ENCODE measurements at regions of chr14 and their contacts with region 1.

Region 1: DNA sequence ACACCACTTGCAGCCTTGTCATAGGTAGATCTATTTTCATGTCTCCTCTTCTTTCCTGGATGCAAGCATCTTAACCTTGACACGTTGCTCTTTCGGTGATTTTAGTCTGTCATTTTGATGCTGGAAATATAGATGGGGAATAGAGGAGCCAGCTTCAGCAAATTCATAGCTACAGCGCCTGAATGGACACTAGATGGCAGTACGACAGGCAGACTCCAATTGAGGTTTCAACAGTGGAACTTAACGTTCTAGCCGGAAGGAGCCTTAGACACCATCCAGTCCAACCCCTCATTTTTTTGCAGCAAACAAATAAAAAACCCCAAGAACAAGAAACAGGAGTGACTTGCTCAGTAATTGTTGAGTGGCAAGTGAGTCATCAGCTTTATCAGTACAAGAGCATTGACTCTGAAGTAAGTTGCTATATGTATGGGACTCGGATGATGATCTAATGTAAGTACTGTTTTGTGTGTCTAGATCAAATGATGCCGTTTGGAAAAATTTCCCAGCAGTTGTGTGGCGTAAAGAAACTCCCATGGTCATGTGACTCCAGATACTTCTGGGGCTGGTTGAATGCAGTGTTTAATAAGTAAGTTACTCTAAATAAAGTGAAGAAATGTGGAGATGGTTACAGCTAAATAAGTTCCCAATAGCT is 9.0 kb downstream of the DMAC2L start:
- DNase-seq: peak; percentile 83
- ATAC-seq: peak; percentile 97
- H3K4me3 Mint-ChIP-seq: no peak overlapping the region
- H3K27ac Mint-ChIP-seq: no peak overlapping the region
- H3K4me1 Mint-ChIP-seq: peaks cover 9% of the 10 kb centered on the region
- H3K27me3 Mint-ChIP-seq: no peaks in the 10 kb centered on the region

Region 2: GRCh38 chr14:49106741-49107667 is 1214.1 kb before region 1 on chr14:
- CTCF ChIA-PET with region 1: no interaction called
- POLR2A ChIA-PET with region 1: no interaction called
- DNase-seq: no peak
- ATAC-seq: no peak
- H3K4me3 Mint-ChIP-seq: no peak overlapping the region
- H3K27ac Mint-ChIP-seq: no peak overlapping the region
- H3K4me1 Mint-ChIP-seq: no peaks in the 10 kb centered on the region
- H3K27me3 Mint-ChIP-seq: no peaks in the 10 kb centered on the region

Region 3: DNA sequence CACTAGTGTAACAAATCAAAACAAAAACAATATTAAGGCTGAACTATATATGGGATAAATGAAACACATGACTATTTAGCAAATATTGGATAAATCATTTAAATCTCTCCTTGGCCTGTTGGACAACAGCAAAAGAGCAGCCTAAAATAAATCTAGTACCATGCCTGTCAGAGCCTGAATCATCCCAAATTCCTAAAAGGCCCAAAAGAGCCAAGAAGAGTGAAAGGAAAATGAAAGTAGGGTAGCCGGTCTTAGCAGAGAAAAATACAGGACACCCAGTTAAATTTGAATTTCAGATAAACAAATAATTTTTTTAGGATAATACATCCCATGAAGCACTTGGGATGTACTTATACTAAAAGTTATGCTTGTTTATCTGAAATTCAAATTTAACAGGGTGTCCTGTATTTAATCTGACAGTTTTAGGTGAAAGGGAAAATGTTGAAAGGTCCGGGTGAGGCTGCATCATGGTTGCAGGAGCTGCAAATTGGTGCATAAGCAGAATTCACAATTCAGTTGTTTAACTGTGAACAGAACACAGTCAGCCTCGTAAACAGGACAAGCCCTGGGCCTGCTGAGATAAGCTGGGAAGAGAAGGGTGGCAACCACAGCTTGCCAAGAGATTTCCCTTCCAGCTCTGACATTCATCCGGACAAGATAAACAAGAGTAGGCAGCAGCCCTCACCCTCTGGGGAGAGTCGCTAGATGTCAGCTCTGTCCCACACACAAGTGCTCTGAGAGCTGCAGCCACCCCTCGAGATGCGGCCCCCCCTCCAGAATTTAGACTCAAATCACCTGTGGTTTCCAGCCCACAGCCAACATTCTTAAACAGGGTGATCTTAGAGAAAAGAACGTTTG is 21.3 kb after region 1 on chr14:
- CTCF ChIA-PET with region 1: interaction called, 16 read pairs
- POLR2A ChIA-PET with region 1: interaction called, 4 read pairs
- DNase-seq: peak; percentile 71
- ATAC-seq: peak; percentile 83
- H3K4me3 Mint-ChIP-seq: no peak overlapping the region
- H3K27ac Mint-ChIP-seq: peak overlapping the region; percentile 52
- H3K4me1 Mint-ChIP-seq: peaks cover 22% of the 10 kb centered on the region
- H3K27me3 Mint-ChIP-seq: no peaks in the 10 kb centered on the region

Region 4: GRCh38 chr14:50363714-50364111 is 42.6 kb after region 1 on chr14:
- CTCF ChIA-PET with region 1: interaction called, 29 read pairs
- POLR2A ChIA-PET with region 1: interaction called, 6 read pairs
- DNase-seq: peak; percentile 77
- ATAC-seq: peak; percentile 92
- H3K4me3 Mint-ChIP-seq: peak overlapping the region; percentile 80
- H3K27ac Mint-ChIP-seq: peak overlapping the region; percentile 96
- H3K4me1 Mint-ChIP-seq: peaks cover 38% of the 10 kb centered on the region
- H3K27me3 Mint-ChIP-seq: no peaks in the 10 kb centered on the region

Region 5: DNA sequence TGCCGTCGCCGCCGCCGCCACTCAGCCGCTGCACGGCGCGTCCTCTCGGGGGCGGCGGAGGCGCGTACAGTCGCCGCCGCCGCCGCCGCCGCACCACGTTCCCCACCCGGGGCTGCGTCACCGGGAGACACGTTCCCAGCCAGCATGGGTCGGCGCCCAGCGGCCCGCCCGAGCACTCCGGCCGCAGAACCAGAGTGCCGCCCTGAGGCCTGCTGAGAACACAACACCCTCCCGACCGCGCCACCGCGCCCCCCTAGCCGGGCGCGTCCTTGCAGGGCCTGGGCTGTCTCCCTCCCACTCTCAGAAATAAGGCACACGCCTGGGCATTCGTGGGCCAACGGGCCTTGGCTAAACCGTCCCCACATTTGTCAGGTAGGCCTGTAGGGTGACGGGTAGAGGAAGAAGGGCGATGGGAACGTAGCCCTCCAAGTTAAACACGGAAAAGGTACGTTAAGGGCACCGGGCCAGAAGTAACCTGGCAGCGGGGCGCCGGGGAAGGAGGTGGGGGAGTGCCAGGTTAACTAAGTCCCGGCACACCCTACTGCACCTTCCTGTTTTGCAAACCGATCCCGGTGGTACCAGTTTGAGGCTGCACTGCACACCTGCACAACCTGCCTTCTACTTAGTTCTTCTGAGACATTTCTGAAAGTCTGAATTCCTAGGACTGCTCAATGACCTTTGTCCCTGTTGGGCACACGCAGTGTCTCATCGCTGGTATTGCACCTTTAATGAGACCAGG is 211.5 kb after region 1 on chr14 and contains the start of gene MAP4K5:
- CTCF ChIA-PET with region 1: interaction called, 31 read pairs
- POLR2A ChIA-PET with region 1: interaction called, 3 read pairs
- DNase-seq: peak; percentile 90
- ATAC-seq: peak; percentile 96
- H3K4me3 Mint-ChIP-seq: peak within 1 kb of the TSS; percentile 91
- H3K27ac Mint-ChIP-seq: peak within 1 kb of the TSS; percentile 84
- H3K4me1 Mint-ChIP-seq: peaks cover 47% of the 10 kb centered on the region
- H3K27me3 Mint-ChIP-seq: peaks cover 3% of the 10 kb centered on the region
- total RNA-seq, gene MAP4K5: 28.3 to 28.6 TPM

Measured in activated CD8-positive, alpha-beta T cell treated with anti-CD3 and anti-CD28 coated beads, Interleukin-2, amount 10 ng/mL, durations not matched to agents 7 days and 5 days (primary cell).